ENCODE measurements at regions of chr9 and their contacts with region 1.

Region 1: DNA sequence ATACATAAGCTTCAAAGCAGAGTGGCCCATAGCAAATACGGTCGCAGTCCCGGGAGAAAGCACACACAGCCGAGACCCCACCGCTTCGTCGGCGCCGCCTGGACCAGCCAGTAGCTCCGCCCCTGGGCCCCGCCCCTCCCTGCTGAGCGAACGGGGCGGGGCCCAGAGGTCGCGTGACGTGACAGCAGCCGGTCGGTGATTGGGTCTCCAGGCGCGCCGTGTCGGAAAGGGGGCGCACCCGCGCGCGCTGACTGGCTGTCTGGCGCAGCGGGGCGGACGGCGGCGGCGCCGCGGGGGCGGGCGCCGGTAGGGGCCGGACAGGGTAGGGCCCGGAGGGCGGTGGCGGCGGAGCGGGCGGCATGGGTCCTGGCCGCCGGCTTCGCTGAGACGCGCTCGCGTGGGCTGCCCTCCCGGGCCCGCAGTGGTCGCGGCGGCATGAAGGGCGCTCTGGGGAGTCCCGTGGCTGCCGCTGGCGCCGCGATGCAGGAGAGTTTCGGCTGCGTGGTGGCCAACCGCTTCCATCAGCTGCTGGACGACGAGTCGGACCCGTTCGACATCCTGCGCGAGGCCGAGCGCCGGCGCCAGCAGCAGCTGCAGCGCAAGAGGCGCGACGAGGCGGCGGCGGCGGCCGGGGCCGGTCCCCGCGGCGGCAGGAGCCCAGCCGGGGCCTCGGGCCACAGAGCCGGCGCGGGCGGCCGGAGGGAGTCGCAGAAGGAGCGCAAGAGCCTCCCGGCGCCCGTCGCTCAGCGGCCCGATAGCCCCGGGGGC is at the start of gene HABP4:
- DNase-seq: peak; percentile 98
- H3K4me3 ChIP-seq: peak within 1 kb of the TSS; percentile 76 to 92 (median 83)
- H3K27ac ChIP-seq: peak within 1 kb of the TSS; percentile 88 to 97 (median 94)
- H3K4me1 ChIP-seq: peaks cover 7 to 42% (median 36%) of the 10 kb centered on the region in 4 donors
- H3K27me3 ChIP-seq: no peaks in the 10 kb centered on the region
- CTCF ChIP-seq: no peak
- EP300 ChIP-seq: no peak
- POLR2A ChIP-seq: peak; percentile 49
- total RNA-seq, gene HABP4: 38.4 to 97.2 (median 54.2) TPM

Region 2: DNA sequence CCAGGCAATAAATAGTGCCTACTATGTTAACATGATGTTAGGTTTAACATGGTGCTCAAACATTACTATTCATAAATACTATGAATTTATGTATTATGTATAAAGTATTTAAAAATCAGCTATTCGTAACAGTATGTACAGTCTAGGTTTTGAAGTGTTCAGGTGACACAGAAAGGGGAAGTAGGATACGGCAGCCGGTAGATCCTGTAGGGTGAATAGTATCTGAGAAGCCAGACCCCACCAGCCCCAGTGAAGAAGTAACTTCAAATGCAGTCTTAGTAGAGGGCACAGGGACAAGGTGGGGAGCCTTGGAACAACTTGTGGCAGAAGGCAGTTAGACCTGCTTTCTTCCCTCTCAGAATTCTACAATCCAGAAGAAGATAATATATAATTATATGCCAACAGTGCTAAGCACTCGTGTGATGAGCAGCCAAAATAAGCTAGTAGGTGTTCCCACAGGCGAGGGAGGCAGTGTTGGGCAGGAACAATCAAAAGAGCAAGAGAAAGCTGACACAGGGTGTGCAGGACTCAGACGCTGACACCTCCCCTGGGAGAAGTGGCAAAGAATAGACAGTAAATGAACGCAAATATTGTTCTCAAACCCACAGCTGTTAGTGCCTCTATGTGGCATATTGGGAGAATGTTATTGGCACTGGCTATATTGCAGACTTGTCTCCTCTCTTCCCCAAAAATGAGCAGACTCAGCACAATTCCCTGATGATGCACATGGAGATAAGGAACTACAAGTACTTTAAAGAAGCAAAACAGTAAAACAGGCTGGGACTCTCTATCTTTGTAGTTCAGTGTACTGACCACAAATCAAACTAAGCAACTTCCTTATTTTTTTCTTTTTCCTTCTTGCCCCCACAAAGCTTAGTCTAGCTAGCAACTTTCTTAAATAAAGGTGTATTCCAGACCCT is 36.5 kb before region 1 on chr9:
- intact Hi-C with region 1: loop called (anchors 2 kb)
- DNase-seq: no peak
- H3K4me3 ChIP-seq: no peak overlapping the region
- H3K27ac ChIP-seq: no peak overlapping the region
- H3K4me1 ChIP-seq: peaks cover 5 to 14% (median 8%) of the 10 kb centered on the region in 4 donors
- H3K27me3 ChIP-seq: no peaks in the 10 kb centered on the region
- CTCF ChIP-seq: no peak
- EP300 ChIP-seq: no peak
- POLR2A ChIP-seq: no peak

Region 3: DNA sequence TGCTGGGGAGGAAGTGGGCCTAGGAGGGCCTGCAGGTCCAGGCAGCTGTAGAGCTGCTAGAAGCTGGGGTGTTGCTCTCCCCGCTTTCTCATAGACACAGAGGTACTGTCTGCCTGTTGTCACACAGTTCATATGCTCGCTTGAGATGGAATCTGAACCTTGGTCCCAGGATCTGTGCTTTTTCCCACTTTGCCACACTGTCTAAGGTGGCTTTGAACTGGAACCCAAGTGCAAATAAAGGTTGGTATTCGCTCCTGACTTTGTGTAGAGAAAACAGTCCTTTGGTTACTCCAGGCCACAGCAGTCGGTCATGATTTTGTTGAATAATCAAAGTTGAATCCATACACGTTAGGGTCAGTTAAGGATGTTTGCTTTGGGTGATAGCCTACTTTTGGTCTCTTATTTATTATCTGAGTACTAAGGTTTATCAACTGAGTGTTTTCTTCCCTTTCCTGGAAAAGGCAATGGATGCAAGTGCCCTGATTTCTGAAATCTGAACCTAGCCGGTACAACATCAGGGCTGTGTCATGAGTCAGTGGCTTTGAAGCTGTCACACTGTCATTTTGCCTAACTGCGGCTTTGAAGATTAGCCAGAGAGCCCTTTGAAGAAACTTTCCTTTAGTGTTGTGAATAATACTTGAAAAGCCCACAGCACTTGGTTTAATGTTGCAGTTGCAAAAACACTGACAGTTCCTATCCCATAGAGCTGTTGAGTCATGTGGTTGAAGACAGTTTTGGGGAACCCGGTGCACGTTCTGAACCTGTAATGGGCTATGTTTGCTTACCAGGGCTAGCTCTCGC is 41.2 kb after region 1 on chr9:
- intact Hi-C with region 1: no loop called
- DNase-seq: no peak
- H3K4me3 ChIP-seq: no peak overlapping the region
- H3K27ac ChIP-seq: peak overlapping the region in 1 of 4 donors; percentile 36
- H3K4me1 ChIP-seq: peaks cover 22 to 31% (median 24%) of the 10 kb centered on the region in 4 donors
- H3K27me3 ChIP-seq: no peaks in the 10 kb centered on the region
- CTCF ChIP-seq: no peak
- EP300 ChIP-seq: no peak
- POLR2A ChIP-seq: no peak

Measured in esophagus muscularis mucosa (tissue), 4 donors.